ENCODE measurements at regions of chr3 and their contacts with region 1.

Region 1: GRCh38 chr3:36591959-36592358 is 172.4 kb downstream of the DCLK3 start:
- DNase-seq: peak; percentile 16
- H3K4me3 ChIP-seq: no peak overlapping the region
- H3K27ac ChIP-seq: no peak overlapping the region
- H3K4me1 ChIP-seq: no peaks in the 10 kb centered on the region
- H3K27me3 ChIP-seq: no peaks in the 10 kb centered on the region
- CTCF ChIP-seq: peak in 1 of 2 donors; percentile 59

Region 2: DNA sequence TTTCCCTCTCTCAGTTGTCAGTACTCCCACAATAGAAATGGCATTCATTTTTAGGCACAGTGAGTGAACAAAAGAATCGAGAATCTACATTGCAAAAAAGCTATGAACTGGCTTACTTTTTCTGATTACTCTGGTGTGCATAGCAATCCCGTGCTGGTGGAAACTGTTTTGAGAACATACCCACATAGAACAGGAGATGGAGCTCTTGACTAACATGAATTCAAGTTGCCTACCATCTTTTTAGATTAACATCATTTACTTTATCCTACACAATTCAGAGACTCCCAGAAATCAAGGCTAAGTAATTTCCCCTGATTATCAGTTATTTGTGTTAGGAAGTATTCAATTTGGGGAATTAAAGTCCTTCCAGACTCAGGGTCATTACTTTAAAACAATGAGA is 626.1 kb before region 1 on chr3:
- CTCF ChIA-PET with region 1: no interaction called
- dilution Hi-C with region 1: no loop called
- in situ Hi-C with region 1: no loop called
- intact Hi-C with region 1: loop called (anchors 1 kb)
- DNase-seq: peak; percentile 14
- H3K4me3 ChIP-seq: no peak overlapping the region
- H3K27ac ChIP-seq: no peak overlapping the region
- H3K4me1 ChIP-seq: no peaks in the 10 kb centered on the region
- H3K27me3 ChIP-seq: peaks cover 5% of the 10 kb centered on the region
- CTCF ChIP-seq: peak; percentile 39 to 62

Measured in mammary epithelial cell (primary cell).